ENCODE measurements at regions of chr1 and their contacts with region 1.

Region 1: GRCh38 chr1:24694380-24694843 is 50.8 kb upstream of the CLIC4 start:
- DNase-seq: peak; percentile 79

Region 2: DNA sequence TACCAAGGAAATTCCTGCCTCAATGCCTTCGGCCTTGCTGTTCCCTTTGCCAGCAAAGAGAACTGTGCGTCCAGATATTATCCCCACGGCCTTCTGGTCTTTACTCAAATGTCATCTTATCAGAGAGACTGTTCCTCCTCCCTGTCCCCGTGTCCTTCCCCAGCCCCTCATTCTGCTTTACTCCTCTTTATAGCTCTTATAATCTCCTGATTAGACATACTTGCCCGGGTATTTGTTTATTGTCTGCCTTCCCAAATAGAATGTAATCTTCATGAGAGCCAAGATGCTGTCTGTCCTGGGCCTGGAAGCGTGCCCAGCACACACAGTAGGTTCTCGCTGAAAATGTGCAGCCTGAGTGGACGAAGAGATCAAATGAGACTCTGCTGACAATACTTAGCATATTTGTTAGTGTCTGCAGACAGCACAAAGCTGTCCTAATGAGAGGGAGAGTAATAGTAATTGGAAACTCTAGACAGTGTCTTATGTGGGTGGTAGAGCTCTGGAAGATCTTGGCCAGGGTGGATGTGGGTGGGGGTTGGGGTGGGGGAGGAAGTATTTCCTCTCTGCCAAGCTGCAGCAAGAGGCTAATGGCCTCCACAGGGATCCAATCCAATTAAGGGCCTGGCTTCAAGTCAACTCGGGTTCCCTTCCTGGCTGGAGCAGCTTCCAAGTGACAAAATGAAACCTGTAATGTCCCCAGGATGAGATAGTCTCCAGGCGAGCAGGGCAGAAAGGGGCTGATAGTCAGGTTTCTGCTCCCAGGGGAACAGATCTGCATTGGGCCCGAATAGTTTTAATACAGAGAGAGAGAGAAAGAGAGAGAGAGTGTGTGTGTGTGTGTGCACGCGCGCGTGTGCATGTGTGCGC is 41.3 kb after region 1 on chr1:
- intact Hi-C with region 1: loop called (anchors 2 kb)
- DNase-seq: no peak

Region 3: GRCh38 chr1:24744911-24745710 is 50.7 kb after region 1 on chr1 and contains the start of gene CLIC4:
- intact Hi-C with region 1: loop called (anchors 1 kb)
- DNase-seq: peak; percentile 100
- total RNA-seq, gene CLIC4: 316 TPM

Measured in cardiac septum (tissue), 1 donor.